ENCODE measurements at regions of chr2 and their contacts with region 1.

Region 1: GRCh38 chr2:64914735-64915509 is 74.3 kb upstream of the SLC1A4 start:
- DNase-seq: no peak
- ATAC-seq: no peak
- H3K4me3 ChIP-seq: no peak overlapping the region
- H3K27ac ChIP-seq: no peak overlapping the region
- H3K4me1 ChIP-seq: no peaks in the 10 kb centered on the region
- CTCF ChIP-seq: no peak
- EP300 ChIP-seq: no peak
- POLR2A ChIP-seq: no peak
- RAD21 ChIP-seq: no peak

Region 2: DNA sequence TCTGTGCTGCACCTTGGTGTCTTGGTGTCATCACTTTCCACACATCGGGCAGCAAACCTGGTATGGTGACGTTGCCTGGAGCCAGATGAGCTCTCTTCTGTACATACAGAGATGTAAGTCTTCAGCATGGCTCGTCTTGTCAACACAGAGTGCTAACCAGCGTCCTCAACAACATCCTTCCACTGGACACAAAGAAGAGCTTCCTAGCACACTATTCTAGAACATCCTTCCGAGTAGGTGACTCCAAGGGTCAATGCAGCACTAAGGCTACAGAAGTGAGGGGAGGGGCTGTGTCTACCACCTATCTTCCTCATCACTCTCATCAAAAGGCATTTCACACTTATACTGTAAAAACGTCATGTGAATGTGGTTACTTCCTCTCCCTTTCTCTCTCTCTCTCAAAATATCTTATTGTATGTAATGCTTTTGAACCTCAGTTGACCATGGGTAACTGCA is 33.9 kb before region 1 on chr2:
- CTCF ChIA-PET with region 1: no interaction called
- POLR2A ChIA-PET with region 1: no interaction called
- DNase-seq: no peak
- ATAC-seq: no peak
- H3K4me3 ChIP-seq: no peak overlapping the region
- H3K27ac ChIP-seq: no peak overlapping the region
- H3K4me1 ChIP-seq: peaks cover 12% of the 10 kb centered on the region
- CTCF ChIP-seq: no peak
- EP300 ChIP-seq: no peak
- POLR2A ChIP-seq: no peak
- RAD21 ChIP-seq: no peak

Region 3: GRCh38 chr2:64904413-64905329 is 10.3 kb before region 1 on chr2:
- CTCF ChIA-PET with region 1: interaction called, 76 read pairs
- POLR2A ChIA-PET with region 1: no interaction called
- DNase-seq: no peak
- ATAC-seq: no peak
- H3K4me3 ChIP-seq: no peak overlapping the region
- H3K27ac ChIP-seq: no peak overlapping the region
- H3K4me1 ChIP-seq: no peaks in the 10 kb centered on the region
- CTCF ChIP-seq: no peak
- EP300 ChIP-seq: no peak
- POLR2A ChIP-seq: no peak
- RAD21 ChIP-seq: no peak

Region 4: DNA sequence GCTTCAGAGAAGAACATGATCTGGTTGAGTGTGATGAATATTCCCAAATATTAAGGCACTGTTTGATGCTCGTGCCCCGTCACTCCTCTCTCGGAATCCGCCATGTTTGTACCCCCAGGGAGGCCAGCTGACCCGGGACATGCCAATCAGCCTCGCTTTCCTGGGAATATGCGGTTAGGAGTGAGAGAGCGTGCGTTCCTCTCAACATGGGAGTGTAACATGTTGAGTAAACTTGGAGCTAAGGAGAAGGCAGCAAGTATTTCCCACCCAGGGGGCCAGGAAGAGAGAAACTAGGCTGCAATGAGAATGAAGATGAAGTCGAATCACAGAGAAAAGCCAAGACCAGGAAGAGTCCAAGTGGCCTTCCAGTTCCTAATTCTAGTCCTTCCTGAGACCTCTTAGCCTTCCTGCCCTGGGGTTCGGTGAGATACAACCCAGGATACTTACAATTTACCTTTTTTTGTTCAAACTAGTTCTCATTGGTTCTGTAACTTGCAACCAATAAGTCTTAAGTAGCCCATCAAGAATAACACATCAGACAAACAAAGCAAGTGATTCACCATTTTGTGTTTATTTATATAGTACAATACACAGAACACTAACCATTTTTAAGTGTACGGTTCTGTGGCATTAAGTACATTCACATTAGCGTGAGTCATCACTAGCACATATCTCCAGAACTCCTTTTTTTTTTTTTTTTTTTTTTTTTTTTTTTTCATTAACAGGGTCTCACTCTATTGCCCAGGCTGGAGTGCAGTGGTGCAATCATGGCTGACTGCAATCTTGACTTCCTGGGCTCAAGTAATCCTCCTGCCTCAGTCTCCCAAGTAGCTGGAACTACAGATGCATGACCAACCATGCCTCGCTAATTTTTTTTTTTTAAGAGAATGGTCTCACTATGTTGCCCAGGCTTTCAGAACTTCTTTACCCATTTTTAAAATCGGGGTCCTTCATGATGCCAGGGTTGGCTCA is 37.9 kb after region 1 on chr2:
- CTCF ChIA-PET with region 1: interaction called, 13 read pairs
- POLR2A ChIA-PET with region 1: no interaction called
- DNase-seq: peak; percentile 51 to 70
- ATAC-seq: peak; percentile 77 to 88; a peak in 5 of 6 replicates
- H3K4me3 ChIP-seq: no peak overlapping the region
- H3K27ac ChIP-seq: peak overlapping the region; percentile 44 to 50; a peak in 4 of 6 replicates
- H3K4me1 ChIP-seq: peaks cover 37% of the 10 kb centered on the region
- CTCF ChIP-seq: no peak
- EP300 ChIP-seq: no peak
- POLR2A ChIP-seq: no peak
- RAD21 ChIP-seq: no peak

Region 5: DNA sequence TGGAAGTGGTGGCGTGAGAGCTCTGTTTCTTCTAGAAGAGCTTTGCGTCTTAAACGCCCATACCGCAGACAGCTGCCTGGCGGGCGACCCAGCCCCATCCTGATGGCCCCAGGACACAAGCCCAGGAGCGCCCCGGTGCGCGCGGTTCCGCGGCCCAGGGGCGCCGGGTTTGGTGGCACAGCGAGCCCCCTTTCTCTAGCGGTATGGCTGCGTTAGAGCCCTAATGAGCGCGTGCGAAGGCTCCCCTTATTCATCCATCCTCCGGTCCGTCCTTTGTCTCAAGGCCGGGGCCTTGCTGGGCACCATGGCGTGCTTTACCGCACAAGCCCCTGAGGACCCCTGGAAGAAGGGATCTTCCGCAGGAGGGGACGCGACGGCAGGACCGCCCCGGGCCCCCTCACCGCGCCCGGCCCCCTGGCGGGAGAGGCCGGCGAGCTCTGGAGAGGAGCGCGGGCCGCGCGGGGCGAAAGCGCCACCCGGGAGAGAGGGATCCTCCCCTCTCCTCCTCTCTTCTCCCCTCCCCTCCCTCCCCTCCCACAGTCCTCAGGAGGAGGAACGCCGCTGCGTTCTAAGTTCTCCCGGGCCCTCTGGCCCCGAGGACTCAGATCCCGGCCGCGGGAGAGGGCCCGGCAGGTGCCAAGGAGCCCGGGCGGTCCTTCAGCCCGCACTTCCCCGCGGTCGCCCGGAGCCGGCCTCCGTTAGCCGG is 73.7 kb after region 1 on chr2:
- CTCF ChIA-PET with region 1: interaction called, 99 read pairs
- POLR2A ChIA-PET with region 1: interaction called, 9 read pairs
- DNase-seq: peak; percentile 89 to 90
- ATAC-seq: peak; percentile 89
- H3K4me3 ChIP-seq: peak overlapping the region; percentile 89
- H3K27ac ChIP-seq: peak overlapping the region; percentile 91 to 94
- H3K4me1 ChIP-seq: peaks cover 27% of the 10 kb centered on the region
- CTCF ChIP-seq: peak; percentile 55
- EP300 ChIP-seq: no peak
- POLR2A ChIP-seq: peak; percentile 35
- RAD21 ChIP-seq: peak in 1 of 2 experiments; percentile 44; a peak in 2 of 5 replicates

Region 6: DNA sequence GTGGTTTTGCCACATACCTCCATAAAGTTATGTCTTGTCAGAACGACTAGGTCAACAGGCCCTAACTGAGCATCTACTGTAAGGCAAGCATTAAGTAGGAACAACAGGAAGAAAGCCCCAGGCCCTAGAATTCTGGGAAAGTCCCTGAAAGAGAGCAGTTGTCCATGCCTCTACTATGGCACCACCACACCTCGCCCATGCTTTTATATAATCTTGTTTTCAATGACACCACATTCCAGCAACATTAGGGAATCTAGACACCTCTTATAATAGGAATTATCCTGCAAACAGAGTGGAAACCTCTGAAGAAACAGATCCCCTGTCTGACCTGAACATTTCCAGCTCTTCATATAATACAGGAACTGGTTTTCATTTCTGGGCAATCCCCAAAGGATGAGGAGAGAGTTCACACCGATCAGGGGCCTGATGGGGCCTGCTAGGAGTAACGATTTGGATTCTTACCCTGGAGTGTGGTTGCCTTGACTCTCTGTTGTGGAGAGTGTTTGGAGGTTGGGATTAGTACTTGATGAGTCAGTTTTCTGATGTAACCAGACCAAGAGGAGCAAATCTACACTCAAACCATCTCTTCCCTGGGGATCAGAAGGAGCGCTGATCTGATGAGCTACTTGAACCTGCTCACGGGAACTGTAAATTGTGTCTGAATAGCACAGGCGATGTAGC is 109.4 kb after region 1 on chr2:
- CTCF ChIA-PET with region 1: interaction called, 177 read pairs
- POLR2A ChIA-PET with region 1: no interaction called
- DNase-seq: peak in 1 of 2 experiments; percentile 29
- ATAC-seq: peak; percentile 48 to 56; a peak in 5 of 6 replicates
- H3K4me3 ChIP-seq: no peak overlapping the region
- H3K27ac ChIP-seq: peak overlapping the region; percentile 39 to 76; a peak in 5 of 6 replicates
- H3K4me1 ChIP-seq: peaks cover 20% of the 10 kb centered on the region
- CTCF ChIP-seq: no peak
- EP300 ChIP-seq: no peak
- POLR2A ChIP-seq: no peak
- RAD21 ChIP-seq: no peak

Region 7: GRCh38 chr2:65056215-65057053 is 141.5 kb after region 1 on chr2 and contains the start of gene CEP68:
- CTCF ChIA-PET with region 1: interaction called, 35 read pairs
- POLR2A ChIA-PET with region 1: interaction called, 4 read pairs
- DNase-seq: peak; percentile 98 to 99
- ATAC-seq: peak; percentile 92 to 99
- H3K4me3 ChIP-seq: peak within 1 kb of the TSS; percentile 67
- H3K27ac ChIP-seq: peak within 1 kb of the TSS; percentile 81 to 93
- H3K4me1 ChIP-seq: peaks cover 16% of the 10 kb centered on the region
- CTCF ChIP-seq: no peak
- EP300 ChIP-seq: no peak
- POLR2A ChIP-seq: peak; percentile 97
- RAD21 ChIP-seq: no peak
- polyA plus RNA-seq, gene CEP68: 9.2 and 9.3 TPM in 2 replicates

Measured in A549 (cell line).